Activated naive CD4-positive, alpha-beta T cell treated with anti-CD3 and anti-CD28 coated beads for 36 hours (primary cell): ENCODE measurements at regions of chr10 and their contacts with region 1.

Region 1: DNA sequence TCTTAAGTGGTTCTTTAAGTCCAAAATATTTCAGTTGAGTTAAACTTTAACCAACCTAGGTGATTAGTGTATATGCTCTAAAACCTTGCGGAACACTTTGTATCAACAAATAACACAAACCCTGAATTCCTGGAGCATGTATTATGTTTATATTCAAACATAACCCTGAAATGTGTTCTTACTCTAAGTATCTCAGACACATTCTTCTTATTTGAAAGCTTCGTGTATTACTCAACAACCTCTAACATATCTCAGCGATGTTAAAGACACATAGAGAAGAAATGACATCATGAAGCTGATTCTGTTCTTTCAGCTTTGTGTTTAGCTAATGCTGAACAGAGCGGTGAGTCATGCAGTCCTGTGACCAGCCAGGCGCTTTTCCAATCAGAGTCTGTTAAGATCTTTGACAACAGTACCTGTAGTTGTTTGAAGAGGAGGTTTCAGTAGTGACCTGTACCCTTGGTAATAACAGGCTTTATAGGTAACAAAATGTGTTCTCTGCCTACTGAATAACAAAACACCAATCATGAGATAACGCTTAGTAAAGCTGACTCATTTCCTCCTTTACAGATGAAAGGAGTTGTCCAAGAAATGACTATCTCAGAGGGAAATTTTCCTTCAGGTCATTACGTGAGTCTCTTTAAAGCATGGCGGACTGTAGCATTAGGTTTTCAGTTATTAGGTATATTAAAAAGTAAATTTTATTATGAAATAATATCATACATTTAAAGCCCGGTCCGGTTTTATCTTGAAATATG is 67.3 kb upstream of the KLF6 start:
- DNase-seq: peak; percentile 85
- H3K4me3 Mint-ChIP-seq: no peak overlapping the region
- H3K27ac Mint-ChIP-seq: peak overlapping the region; percentile 88
- H3K4me1 Mint-ChIP-seq: peaks cover 49% of the 10 kb centered on the region
- H3K27me3 Mint-ChIP-seq: no peaks in the 10 kb centered on the region

Region 2: DNA sequence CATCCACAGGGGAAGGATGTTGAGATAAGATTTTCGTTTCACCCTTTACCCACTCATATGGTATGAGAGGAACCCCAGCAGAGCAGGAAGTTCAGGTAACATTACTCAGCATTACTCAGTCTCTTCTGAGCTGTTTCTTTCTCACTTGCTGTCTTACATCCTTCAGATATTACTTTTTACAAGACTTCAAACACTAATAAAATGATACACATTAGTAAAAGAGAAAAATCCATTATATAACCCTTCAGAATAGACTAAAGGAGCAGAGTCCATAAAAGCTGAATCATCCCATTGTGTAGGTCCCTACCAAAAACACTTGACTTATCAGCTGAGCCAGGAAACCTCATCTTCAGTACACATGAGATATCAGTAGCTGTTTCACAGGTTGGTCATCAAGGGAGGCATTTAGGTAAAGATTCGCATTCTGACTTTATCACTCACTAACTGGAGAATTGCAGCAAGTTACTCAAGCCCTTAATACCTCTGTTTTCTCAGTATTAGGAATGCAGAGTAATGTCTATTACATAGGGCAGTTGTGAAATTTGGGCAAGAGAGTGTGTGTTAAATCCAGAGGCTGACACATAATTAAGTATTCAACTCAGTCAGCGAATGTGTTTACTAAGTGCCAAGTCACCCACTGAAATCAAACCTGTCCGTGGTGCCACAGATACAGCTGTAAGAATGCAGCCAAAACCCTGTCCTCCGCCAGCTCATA is 112.0 kb before region 1 on chr10:
- CTCF ChIA-PET with region 1: interaction called, 3 read pairs
- intact Hi-C with region 1: loop called (anchors 1 kb)
- DNase-seq: no peak
- H3K4me3 Mint-ChIP-seq: no peak overlapping the region
- H3K27ac Mint-ChIP-seq: peak overlapping the region; percentile 59
- H3K4me1 Mint-ChIP-seq: peaks cover 31% of the 10 kb centered on the region
- H3K27me3 Mint-ChIP-seq: no peaks in the 10 kb centered on the region

Region 3: GRCh38 chr10:3805791-3806461 is 46.4 kb before region 1 on chr10:
- CTCF ChIA-PET with region 1: no interaction called
- intact Hi-C with region 1: loop called (anchors 1 kb)
- DNase-seq: peak; percentile 45
- H3K4me3 Mint-ChIP-seq: peak overlapping the region; percentile 10
- H3K27ac Mint-ChIP-seq: no peak overlapping the region
- H3K4me1 Mint-ChIP-seq: peaks cover 73% of the 10 kb centered on the region
- H3K27me3 Mint-ChIP-seq: no peaks in the 10 kb centered on the region

Region 4: DNA sequence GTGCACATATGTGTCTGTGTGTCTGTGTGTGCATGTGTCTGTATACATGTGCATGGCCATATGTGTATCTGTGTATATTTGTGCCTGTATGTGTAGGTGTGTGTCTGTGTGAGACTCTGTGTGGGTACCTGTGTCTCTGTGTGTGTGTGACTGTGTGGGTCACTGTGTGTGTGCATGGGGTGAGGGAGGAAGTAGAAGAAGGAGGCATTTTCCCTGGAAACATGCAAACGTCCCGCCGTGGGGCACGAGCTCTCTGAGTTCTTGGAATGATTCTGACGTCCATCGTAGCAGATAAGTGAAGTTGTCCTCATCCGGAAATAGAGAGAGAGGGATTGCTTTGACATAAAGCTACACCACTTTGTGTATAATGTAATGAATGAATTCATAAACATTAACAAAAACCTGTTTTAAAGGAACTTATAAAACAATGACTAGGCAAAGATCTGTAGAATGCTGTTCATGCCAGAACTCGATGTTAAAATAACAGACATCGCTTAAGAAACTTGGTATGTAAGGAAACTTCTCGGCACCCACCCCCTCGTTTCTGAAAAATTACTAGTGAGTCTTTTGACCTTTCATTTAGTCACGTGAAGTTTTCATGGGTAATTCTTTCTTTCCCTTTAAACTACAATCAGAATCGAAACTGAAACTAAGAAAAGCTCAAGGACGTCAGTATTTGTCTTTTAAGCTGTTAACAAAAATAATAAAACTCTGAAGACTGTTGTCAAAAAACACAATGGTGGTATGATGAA is 23.7 kb before region 1 on chr10:
- CTCF ChIA-PET with region 1: interaction called, 3 read pairs
- intact Hi-C with region 1: loop called (anchors 1 kb)
- DNase-seq: peak; percentile 82
- H3K4me3 Mint-ChIP-seq: peak overlapping the region; percentile 52
- H3K27ac Mint-ChIP-seq: peak overlapping the region; percentile 87
- H3K4me1 Mint-ChIP-seq: peaks cover 43% of the 10 kb centered on the region
- H3K27me3 Mint-ChIP-seq: no peaks in the 10 kb centered on the region

Region 5: DNA sequence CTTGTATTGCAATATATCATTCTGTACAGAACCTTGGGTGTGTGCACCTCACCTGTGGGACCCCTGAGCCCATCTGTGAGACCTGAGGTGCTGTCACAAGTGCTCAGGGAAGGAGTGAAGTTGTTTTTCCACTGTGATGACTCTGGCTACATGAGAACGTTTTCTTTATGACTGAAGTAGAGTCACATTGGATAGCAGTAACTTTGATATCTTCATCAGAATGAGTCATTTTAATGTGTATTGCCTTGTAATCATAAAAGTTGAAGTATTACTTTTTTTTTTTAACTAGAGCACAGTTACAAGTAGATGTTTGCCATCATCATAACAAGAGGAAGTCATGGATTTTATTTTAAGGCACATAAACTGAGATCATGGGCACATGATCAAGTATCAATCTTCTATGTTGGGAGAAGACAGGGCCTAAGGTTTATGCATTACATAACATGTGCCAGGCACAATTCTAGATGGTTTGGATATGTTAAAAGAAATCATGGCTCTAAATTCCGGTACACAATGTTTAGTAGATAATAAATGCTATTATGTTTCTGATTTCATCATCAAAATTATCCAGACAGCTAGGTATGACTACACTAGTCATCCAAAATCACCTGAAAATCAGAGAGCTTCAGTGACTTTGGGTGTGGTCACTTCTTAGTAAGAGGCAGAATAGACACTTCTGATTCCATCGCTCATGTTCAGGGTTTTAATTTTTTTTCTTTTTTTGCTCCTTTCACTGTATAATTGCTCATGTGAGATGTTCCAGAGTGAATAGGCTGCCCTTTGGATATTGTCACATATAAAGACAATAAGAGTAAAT is 15.3 kb after region 1 on chr10:
- CTCF ChIA-PET with region 1: interaction called, 4 read pairs
- intact Hi-C with region 1: loop called (anchors 1 kb)
- DNase-seq: peak; percentile 46
- H3K4me3 Mint-ChIP-seq: no peak overlapping the region
- H3K27ac Mint-ChIP-seq: peak overlapping the region; percentile 70
- H3K4me1 Mint-ChIP-seq: peaks cover 53% of the 10 kb centered on the region
- H3K27me3 Mint-ChIP-seq: no peaks in the 10 kb centered on the region

Region 6: GRCh38 chr10:4470231-4470835 is 618.0 kb after region 1 on chr10:
- CTCF ChIA-PET with region 1: no interaction called
- intact Hi-C with region 1: no loop called
- DNase-seq: no peak
- H3K4me3 Mint-ChIP-seq: no peak overlapping the region
- H3K27ac Mint-ChIP-seq: no peak overlapping the region
- H3K4me1 Mint-ChIP-seq: peaks cover 6% of the 10 kb centered on the region
- H3K27me3 Mint-ChIP-seq: peaks cover 18% of the 10 kb centered on the region